Mammary epithelial cell (primary cell): ENCODE measurements at regions of chr9 and their contacts with region 1.

Region 1: GRCh38 chr9:116646661-116647512 is 40.2 kb upstream of the TRIM32 start:
- DNase-seq: peak; percentile 28
- H3K4me3 ChIP-seq: no peak overlapping the region
- H3K27ac ChIP-seq: no peak overlapping the region
- H3K4me1 ChIP-seq: no peaks in the 10 kb centered on the region
- H3K27me3 ChIP-seq: no peaks in the 10 kb centered on the region
- CTCF ChIP-seq: peak; percentile 69 to 81

Region 2: DNA sequence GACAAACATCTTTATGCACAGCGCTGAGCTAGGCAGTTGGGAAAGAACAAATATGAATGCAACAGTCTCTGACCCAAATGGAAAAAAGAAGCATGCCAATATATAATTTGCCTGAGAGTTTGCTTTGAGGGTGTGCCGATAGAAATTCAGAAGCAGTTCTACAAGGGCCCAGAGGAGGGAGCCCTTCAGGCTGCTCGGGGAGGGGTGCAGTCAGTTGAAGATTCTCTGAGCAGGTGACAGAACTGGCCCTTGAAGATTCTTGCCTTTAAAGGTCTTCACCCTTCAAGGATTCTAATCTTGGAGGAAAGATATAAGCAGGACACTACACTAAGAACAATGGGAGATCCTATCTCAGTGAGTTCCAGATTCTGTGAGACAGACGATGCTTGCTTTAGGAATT is 497.0 kb before region 1 on chr9:
- CTCF ChIA-PET with region 1: no interaction called
- dilution Hi-C with region 1: no loop called
- in situ Hi-C with region 1: no loop called
- intact Hi-C with region 1: loop called (anchors 5 kb)
- DNase-seq: no peak
- H3K4me3 ChIP-seq: no peak overlapping the region
- H3K27ac ChIP-seq: no peak overlapping the region
- H3K4me1 ChIP-seq: peaks cover 18% of the 10 kb centered on the region
- H3K27me3 ChIP-seq: peaks cover 6% of the 10 kb centered on the region
- CTCF ChIP-seq: peak; percentile 69 to 79

Region 3: GRCh38 chr9:116163293-116164055 is 483.4 kb before region 1 on chr9:
- CTCF ChIA-PET with region 1: no interaction called
- dilution Hi-C with region 1: no loop called
- in situ Hi-C with region 1: no loop called
- intact Hi-C with region 1: loop called (anchors 5 kb)
- DNase-seq: no peak
- H3K4me3 ChIP-seq: no peak overlapping the region
- H3K27ac ChIP-seq: no peak overlapping the region
- H3K4me1 ChIP-seq: no peaks in the 10 kb centered on the region
- H3K27me3 ChIP-seq: no peaks in the 10 kb centered on the region
- CTCF ChIP-seq: peak; percentile 52

Region 4: GRCh38 chr9:116494815-116495634 is 151.9 kb before region 1 on chr9:
- CTCF ChIA-PET with region 1: no interaction called
- dilution Hi-C with region 1: no loop called
- in situ Hi-C with region 1: no loop called
- intact Hi-C with region 1: loop called (anchors 5 kb)
- DNase-seq: no peak
- H3K4me3 ChIP-seq: no peak overlapping the region
- H3K27ac ChIP-seq: no peak overlapping the region
- H3K4me1 ChIP-seq: no peaks in the 10 kb centered on the region
- H3K27me3 ChIP-seq: no peaks in the 10 kb centered on the region
- CTCF ChIP-seq: peak; percentile 83 to 86

Region 5: GRCh38 chr9:116572095-116572748 is 74.7 kb before region 1 on chr9:
- CTCF ChIA-PET with region 1: no interaction called
- dilution Hi-C with region 1: no loop called
- in situ Hi-C with region 1: no loop called
- intact Hi-C with region 1: loop called (anchors 5 kb)
- DNase-seq: peak; percentile 48
- H3K4me3 ChIP-seq: no peak overlapping the region
- H3K27ac ChIP-seq: no peak overlapping the region
- H3K4me1 ChIP-seq: no peaks in the 10 kb centered on the region
- H3K27me3 ChIP-seq: no peaks in the 10 kb centered on the region
- CTCF ChIP-seq: peak; percentile 90 to 96

Region 6: GRCh38 chr9:116580853-116581252 is 66.0 kb before region 1 on chr9:
- CTCF ChIA-PET with region 1: no interaction called
- dilution Hi-C with region 1: loop called (anchors 5 kb)
- in situ Hi-C with region 1: loop called in 1 of 2 experiments (anchors 10 kb)
- intact Hi-C with region 1: no loop called
- DNase-seq: no peak
- H3K4me3 ChIP-seq: no peak overlapping the region
- H3K27ac ChIP-seq: no peak overlapping the region
- H3K4me1 ChIP-seq: no peaks in the 10 kb centered on the region
- H3K27me3 ChIP-seq: no peaks in the 10 kb centered on the region
- CTCF ChIP-seq: no peak

Region 7: GRCh38 chr9:116589392-116590354 is 57.2 kb before region 1 on chr9:
- CTCF ChIA-PET with region 1: no interaction called
- dilution Hi-C with region 1: loop called (anchors 5 kb)
- in situ Hi-C with region 1: loop called (anchors 5 to 10 kb)
- intact Hi-C with region 1: loop called (anchors 1 kb)
- DNase-seq: peak; percentile 72
- H3K4me3 ChIP-seq: no peak overlapping the region
- H3K27ac ChIP-seq: no peak overlapping the region
- H3K4me1 ChIP-seq: no peaks in the 10 kb centered on the region
- H3K27me3 ChIP-seq: no peaks in the 10 kb centered on the region
- CTCF ChIP-seq: peak; percentile 65 to 81

Region 8: DNA sequence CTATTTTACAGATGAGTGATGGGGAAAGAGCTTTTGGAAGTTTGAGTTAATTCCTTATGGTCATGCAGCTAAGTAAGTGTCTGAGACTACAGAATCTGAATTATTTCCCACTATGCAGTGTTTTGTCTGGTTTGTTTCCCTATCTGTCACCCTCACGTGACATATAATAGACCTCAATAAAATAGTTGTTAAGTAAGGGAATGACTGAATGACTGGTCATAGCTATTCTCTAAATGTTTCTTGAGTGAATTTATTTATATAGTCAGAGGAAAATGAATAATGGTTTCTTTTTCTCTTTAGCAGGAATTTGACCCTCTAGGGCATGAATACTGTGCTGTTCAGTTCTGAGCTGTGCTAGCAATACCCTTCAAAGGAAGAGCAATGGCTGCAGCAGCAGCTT is 50.5 kb after region 1 on chr9:
- CTCF ChIA-PET with region 1: no interaction called
- dilution Hi-C with region 1: no loop called
- in situ Hi-C with region 1: no loop called
- intact Hi-C with region 1: no loop called
- DNase-seq: peak; percentile 66
- H3K4me3 ChIP-seq: no peak overlapping the region
- H3K27ac ChIP-seq: no peak overlapping the region
- H3K4me1 ChIP-seq: peaks cover 31% of the 10 kb centered on the region
- H3K27me3 ChIP-seq: no peaks in the 10 kb centered on the region
- CTCF ChIP-seq: no peak